Activated CD8-positive, alpha-beta T cell treated with anti-CD3 and anti-CD28 coated beads for 36 hours (primary cell): ENCODE measurements at regions of chr1 and their contacts with region 1.

Region 1: DNA sequence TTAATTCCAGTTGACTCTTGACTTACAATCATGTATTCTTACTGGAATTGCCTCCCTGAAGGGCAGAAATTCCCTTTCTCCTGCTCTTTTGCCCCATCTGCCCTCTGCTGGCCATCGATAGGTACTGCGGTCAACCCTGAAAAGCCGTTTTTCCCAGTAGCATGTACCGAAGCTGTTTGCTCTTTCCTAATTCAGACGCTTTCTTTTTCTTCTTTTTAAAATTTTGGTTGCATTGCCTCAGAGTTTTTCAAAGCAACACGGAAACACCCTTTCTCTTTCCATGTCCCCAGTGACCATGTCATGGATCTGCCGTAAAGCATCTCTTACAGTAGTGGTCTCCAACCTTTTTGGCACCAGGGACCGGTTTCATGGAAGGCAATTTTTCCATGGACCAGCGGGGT is 164.2 kb upstream of the C1orf21 start:
- DNase-seq: peak; percentile 37
- ATAC-seq: peak; percentile 42
- H3K4me3 Mint-ChIP-seq: no peak overlapping the region
- H3K27ac Mint-ChIP-seq: no peak overlapping the region
- H3K4me1 Mint-ChIP-seq: no peaks in the 10 kb centered on the region
- H3K27me3 Mint-ChIP-seq: peaks cover 4% of the 10 kb centered on the region
- CTCF ChIP-seq: peak; percentile 97

Region 2: DNA sequence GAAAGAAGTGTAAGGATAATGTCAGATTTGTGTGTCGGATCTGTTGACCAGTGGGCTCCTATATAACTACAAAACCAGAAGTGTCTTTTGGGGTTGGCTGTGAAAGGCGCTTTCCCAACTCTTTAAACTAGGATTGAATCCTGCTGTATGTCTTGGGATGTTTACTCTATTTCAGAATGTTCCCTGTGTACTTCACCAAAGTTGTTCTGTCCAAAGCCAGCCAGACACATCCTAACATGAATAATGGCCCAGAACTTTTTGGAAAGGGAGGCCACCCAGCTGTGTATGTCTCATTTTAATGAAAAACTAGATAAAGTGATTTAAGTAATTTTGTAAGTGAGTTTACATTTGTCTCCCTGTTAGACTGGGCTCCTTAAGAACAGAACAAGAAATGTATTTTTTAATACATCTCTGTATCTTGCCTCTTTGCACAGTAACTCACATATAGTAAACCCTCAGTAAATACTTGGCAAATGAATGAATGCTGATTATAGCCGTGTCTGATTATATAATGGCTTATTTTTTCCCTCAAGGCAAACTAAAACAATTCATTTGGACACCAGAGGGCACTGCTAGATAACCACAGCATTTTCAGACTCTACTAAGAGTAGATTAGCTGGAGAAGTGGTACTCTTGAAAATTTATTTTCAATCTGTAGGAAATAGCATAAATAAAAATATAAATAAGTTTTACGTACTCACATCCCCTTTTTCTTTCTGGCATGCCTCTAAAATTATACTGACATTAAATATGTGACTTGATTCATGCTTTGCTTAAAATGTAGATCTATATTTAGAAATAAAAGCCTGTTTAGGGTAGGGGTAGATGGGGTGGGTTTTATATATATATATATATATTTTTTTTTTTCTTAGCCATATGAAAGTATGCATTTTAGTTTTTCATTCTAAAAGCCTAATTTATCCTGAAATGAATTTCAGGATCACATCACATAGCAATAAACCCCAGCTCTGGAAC is 147.3 kb before region 1 on chr1:
- CTCF ChIA-PET with region 1: interaction called, 16 read pairs
- POLR2A ChIA-PET with region 1: no interaction called
- intact Hi-C with region 1: loop called (anchors 2 kb)
- DNase-seq: peak; percentile 22
- ATAC-seq: no peak
- H3K4me3 Mint-ChIP-seq: no peak overlapping the region
- H3K27ac Mint-ChIP-seq: no peak overlapping the region
- H3K4me1 Mint-ChIP-seq: peaks cover 23% of the 10 kb centered on the region
- H3K27me3 Mint-ChIP-seq: no peaks in the 10 kb centered on the region
- CTCF ChIP-seq: peak; percentile 80

Region 3: GRCh38 chr1:184237588-184237987 is 14.9 kb after region 1 on chr1:
- CTCF ChIA-PET with region 1: interaction called, 10 read pairs
- POLR2A ChIA-PET with region 1: no interaction called
- intact Hi-C with region 1: no loop called
- DNase-seq: no peak
- ATAC-seq: no peak
- H3K4me3 Mint-ChIP-seq: no peak overlapping the region
- H3K27ac Mint-ChIP-seq: no peak overlapping the region
- H3K4me1 Mint-ChIP-seq: no peaks in the 10 kb centered on the region
- H3K27me3 Mint-ChIP-seq: peaks cover 9% of the 10 kb centered on the region
- CTCF ChIP-seq: no peak

Region 4: DNA sequence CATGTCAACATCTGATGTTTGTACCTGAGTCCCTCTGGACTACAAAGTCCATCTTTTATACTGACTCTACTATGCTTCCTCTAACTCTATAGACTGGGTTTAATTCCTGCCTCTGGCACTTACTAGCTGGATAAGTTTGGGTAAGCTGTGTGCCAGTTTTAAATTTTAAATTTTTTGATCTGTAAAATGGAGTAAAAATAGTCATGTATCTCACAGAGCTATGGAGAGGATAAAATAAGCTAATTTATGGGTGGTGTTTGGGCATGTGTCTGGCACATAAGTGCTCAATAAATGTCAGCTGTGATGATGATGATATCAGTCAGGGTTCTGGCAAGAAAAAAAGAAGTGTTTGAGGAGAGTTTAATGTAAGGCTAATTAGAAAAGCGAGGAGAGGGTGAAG is 25.0 kb after region 1 on chr1:
- CTCF ChIA-PET with region 1: no interaction called
- POLR2A ChIA-PET with region 1: no interaction called
- intact Hi-C with region 1: no loop called
- DNase-seq: no peak
- ATAC-seq: no peak
- H3K4me3 Mint-ChIP-seq: no peak overlapping the region
- H3K27ac Mint-ChIP-seq: no peak overlapping the region
- H3K4me1 Mint-ChIP-seq: no peaks in the 10 kb centered on the region
- H3K27me3 Mint-ChIP-seq: peaks cover 21% of the 10 kb centered on the region
- CTCF ChIP-seq: no peak

Region 5: GRCh38 chr1:184310157-184310806 is 87.6 kb after region 1 on chr1:
- CTCF ChIA-PET with region 1: no interaction called
- POLR2A ChIA-PET with region 1: no interaction called
- intact Hi-C with region 1: no loop called
- DNase-seq: peak; percentile 11
- ATAC-seq: no peak
- H3K4me3 Mint-ChIP-seq: no peak overlapping the region
- H3K27ac Mint-ChIP-seq: no peak overlapping the region
- H3K4me1 Mint-ChIP-seq: no peaks in the 10 kb centered on the region
- H3K27me3 Mint-ChIP-seq: peaks cover 10% of the 10 kb centered on the region
- CTCF ChIP-seq: no peak